Transverse colon (tissue), 4 donors: ENCODE measurements at regions of chr9 and their contacts with region 1.

Region 1: GRCh38 chr9:31364171-31364570 is 1020.3 kb upstream of the ACO1 start:
- DNase-seq: no peak
- H3K4me3 ChIP-seq: no peak overlapping the region
- H3K27ac ChIP-seq: no peak overlapping the region
- H3K4me1 ChIP-seq: no peaks in the 10 kb centered on the region
- H3K27me3 ChIP-seq: no peaks in the 10 kb centered on the region
- CTCF ChIP-seq: no peak
- EP300 ChIP-seq: no peak
- POLR2A ChIP-seq: no peak

Region 2: GRCh38 chr9:32117276-32117675 is 753.1 kb after region 1 on chr9:
- in situ Hi-C with region 1: no loop called
- intact Hi-C with region 1: loop called (anchors 5 kb)
- DNase-seq: no peak
- H3K4me3 ChIP-seq: no peak overlapping the region
- H3K27ac ChIP-seq: no peak overlapping the region
- H3K4me1 ChIP-seq: no peaks in the 10 kb centered on the region
- H3K27me3 ChIP-seq: no peaks in the 10 kb centered on the region
- CTCF ChIP-seq: no peak
- EP300 ChIP-seq: no peak
- POLR2A ChIP-seq: no peak